MCF 10A (cell line): ENCODE measurements at regions of chr6 and their contacts with region 1.

Region 1: DNA sequence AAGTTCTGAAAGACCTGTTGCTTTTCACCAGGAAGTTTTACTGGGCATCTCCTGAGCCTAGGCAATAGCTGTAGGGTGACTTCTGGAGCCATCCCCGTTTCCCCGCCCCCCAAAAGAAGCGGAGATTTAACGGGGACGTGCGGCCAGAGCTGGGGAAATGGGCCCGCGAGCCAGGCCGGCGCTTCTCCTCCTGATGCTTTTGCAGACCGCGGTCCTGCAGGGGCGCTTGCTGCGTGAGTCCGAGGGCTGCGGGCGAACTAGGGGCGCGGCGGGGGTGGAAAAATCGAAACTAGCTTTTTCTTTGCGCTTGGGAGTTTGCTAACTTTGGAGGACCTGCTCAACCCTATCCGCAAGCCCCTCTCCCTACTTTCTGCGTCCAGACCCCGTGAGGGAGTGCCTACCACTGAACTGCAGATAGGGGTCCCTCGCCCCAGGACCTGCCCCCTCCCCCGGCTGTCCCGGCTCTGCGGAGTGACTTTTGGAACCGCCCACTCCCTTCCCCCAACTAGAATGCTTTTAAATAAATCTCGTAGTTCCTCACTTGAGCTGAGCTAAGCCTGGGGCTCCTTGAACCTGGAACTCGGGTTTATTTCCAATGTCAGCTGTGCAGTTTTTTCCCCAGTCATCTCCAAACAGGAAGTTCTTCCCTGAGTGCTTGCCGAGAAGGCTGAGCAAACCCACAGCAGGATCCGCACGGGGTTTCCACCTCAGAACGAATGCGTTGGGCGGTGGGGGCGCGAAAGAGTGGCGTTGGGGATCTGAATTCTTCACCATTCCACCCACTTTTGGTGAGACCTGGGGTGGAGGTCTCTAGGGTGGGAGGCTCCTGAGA is at the start of gene HFE:
- DNase-seq: peak; percentile 53
- H3K4me3 Mint-ChIP-seq: peak within 1 kb of the TSS; percentile 88
- H3K27ac Mint-ChIP-seq: peak within 1 kb of the TSS; percentile 92
- H3K4me1 Mint-ChIP-seq: peaks cover 10% of the 10 kb centered on the region
- H3K27me3 Mint-ChIP-seq: no peaks in the 10 kb centered on the region
- CTCF ChIP-seq: no peak
- total RNA-seq, gene HFE: 2.8 and 5.2 TPM in 2 replicates

Region 2: GRCh38 chr6:25006565-25007001 is 1080.9 kb before region 1 on chr6:
- CTCF ChIA-PET with region 1: no interaction called
- POLR2A ChIA-PET with region 1: no interaction called
- intact Hi-C with region 1: no loop called
- DNase-seq: peak; percentile 97
- H3K4me3 Mint-ChIP-seq: peak overlapping the region; percentile 12
- H3K27ac Mint-ChIP-seq: peak overlapping the region; percentile 78
- H3K4me1 Mint-ChIP-seq: peaks cover 60% of the 10 kb centered on the region
- H3K27me3 Mint-ChIP-seq: no peaks in the 10 kb centered on the region
- CTCF ChIP-seq: no peak

Region 3: GRCh38 chr6:26054857-26055669 is 32.4 kb before region 1 on chr6:
- CTCF ChIA-PET with region 1: interaction called, 425 read pairs
- POLR2A ChIA-PET with region 1: interaction called, 235 read pairs
- intact Hi-C with region 1: no loop called
- DNase-seq: peak; percentile 96
- H3K4me3 Mint-ChIP-seq: peak overlapping the region; percentile 74
- H3K27ac Mint-ChIP-seq: peak overlapping the region; percentile 92
- H3K4me1 Mint-ChIP-seq: no peaks in the 10 kb centered on the region
- H3K27me3 Mint-ChIP-seq: no peaks in the 10 kb centered on the region
- CTCF ChIP-seq: no peak

Region 4: GRCh38 chr6:26065952-26066380 is 21.5 kb before region 1 on chr6:
- CTCF ChIA-PET with region 1: interaction called, 425 read pairs
- POLR2A ChIA-PET with region 1: interaction called, 235 read pairs
- intact Hi-C with region 1: no loop called
- DNase-seq: peak; percentile 87
- H3K4me3 Mint-ChIP-seq: no peak overlapping the region
- H3K27ac Mint-ChIP-seq: peak overlapping the region; percentile 23
- H3K4me1 Mint-ChIP-seq: no peaks in the 10 kb centered on the region
- H3K27me3 Mint-ChIP-seq: no peaks in the 10 kb centered on the region
- CTCF ChIP-seq: peak; percentile 81

Region 5: GRCh38 chr6:26075063-26075717 is 12.3 kb before region 1 on chr6:
- CTCF ChIA-PET with region 1: interaction called, 425 read pairs
- POLR2A ChIA-PET with region 1: interaction called, 25 read pairs
- intact Hi-C with region 1: no loop called
- DNase-seq: no peak
- H3K4me3 Mint-ChIP-seq: no peak overlapping the region
- H3K27ac Mint-ChIP-seq: no peak overlapping the region
- H3K4me1 Mint-ChIP-seq: no peaks in the 10 kb centered on the region
- H3K27me3 Mint-ChIP-seq: no peaks in the 10 kb centered on the region
- CTCF ChIP-seq: no peak